Esophagus squamous epithelium (tissue), 5 donors: ENCODE measurements at regions of chr11 and their contacts with region 1.

Region 1: GRCh38 chr11:63838678-63839507 is at the start of gene MARK2:
- DNase-seq: peak; percentile 97
- H3K4me3 ChIP-seq: peak within 1 kb of the TSS; percentile 75 to 98 (median 86)
- H3K27ac ChIP-seq: peak within 1 kb of the TSS; percentile 93 to 96 (median 95)
- H3K4me1 ChIP-seq: peaks cover 42 to 56% (median 43%) of the 10 kb centered on the region in 3 donors
- H3K27me3 ChIP-seq: no peaks in the 10 kb centered on the region
- CTCF ChIP-seq: peak in 3 of 6 experiments; percentile 7 to 20 (median 7)
- POLR2A ChIP-seq: peak in 3 of 4 donors; percentile 49 to 79 (median 67)
- total RNA-seq, gene MARK2: 47.0 to 91.0 (median 62.2) TPM

Region 2: GRCh38 chr11:63369165-63369970 is 469.5 kb before region 1 on chr11 and contains the start of gene SLC22A9:
- intact Hi-C with region 1: no loop called
- DNase-seq: no peak
- H3K4me3 ChIP-seq: no peak within 1 kb of the TSS
- H3K27ac ChIP-seq: no peak within 1 kb of the TSS
- H3K4me1 ChIP-seq: no peaks in the 10 kb centered on the region
- H3K27me3 ChIP-seq: peaks cover 0 to 18% (median 0%) of the 10 kb centered on the region in 4 donors
- CTCF ChIP-seq: no peak
- POLR2A ChIP-seq: no peak
- total RNA-seq, gene SLC22A9: not detected

Region 3: DNA sequence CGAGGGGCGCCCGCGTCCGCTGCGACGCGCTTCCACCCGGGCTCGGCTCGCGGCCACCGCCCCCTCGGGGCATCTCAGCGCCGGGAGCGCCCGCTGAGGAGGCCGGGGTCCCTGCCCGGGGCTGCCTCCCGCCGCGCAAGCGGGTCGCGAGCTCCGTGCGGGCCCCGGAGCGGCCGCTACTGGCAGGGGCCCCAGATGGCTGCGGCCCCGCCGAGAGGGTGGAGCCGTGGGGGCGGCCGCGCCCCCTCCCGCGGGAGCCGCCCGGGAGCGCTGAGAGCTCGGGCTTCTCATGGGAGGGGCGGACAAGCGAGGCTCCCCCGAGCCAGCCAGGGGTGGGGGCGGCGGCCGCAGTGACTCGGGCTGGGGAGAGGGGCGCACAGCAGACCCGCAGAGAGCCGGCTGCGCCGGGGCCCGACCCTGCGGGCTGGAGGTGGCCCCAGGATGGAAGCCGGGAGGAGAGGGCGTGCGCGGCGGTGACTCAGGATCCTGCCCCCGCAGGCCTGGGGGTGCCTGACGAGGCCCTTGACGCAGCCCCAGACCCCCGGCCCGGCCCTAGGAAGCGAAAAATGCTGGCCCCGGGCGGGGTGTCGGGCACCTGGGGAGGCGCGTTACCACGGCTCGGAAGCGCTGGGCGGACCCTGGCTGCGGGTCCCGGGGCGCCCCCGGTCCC is 69.7 kb before region 1 on chr11:
- intact Hi-C with region 1: no loop called
- DNase-seq: no peak
- H3K4me3 ChIP-seq: peak overlapping the region; percentile 47 to 98 (median 82)
- H3K27ac ChIP-seq: peak overlapping the region; percentile 65 to 89 (median 80)
- H3K4me1 ChIP-seq: peaks cover 14 to 55% (median 28%) of the 10 kb centered on the region in 3 donors
- H3K27me3 ChIP-seq: peaks cover 0 to 11% (median 0%) of the 10 kb centered on the region in 4 donors
- CTCF ChIP-seq: peak in 1 of 6 experiments; percentile 22
- POLR2A ChIP-seq: peak in 1 of 4 donors; percentile 18

Region 4: DNA sequence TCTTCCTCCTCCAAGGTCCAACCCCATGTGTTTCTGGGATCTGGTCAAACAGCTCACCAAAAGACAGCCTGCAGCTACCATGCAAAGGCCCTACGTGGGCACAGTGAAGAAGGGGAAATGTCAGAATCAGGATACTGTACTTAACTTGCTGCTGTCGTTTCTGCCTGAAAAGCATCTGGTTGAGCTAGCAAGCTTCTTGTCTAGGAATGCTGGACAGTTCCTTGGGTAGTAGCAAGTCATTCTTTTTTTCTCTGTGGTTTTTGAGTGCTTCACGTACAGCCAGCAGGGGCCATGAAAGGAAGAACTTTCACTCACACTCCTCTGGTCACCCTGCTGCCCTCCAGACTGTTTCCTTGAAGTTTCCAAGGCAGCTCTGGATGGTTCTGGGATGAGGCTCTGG is 53.3 kb after region 1 on chr11:
- intact Hi-C with region 1: loop called (anchors 10 kb)
- DNase-seq: no peak
- H3K4me3 ChIP-seq: no peak overlapping the region
- H3K27ac ChIP-seq: no peak overlapping the region
- H3K4me1 ChIP-seq: peaks cover 30 to 68% (median 51%) of the 10 kb centered on the region in 3 donors
- H3K27me3 ChIP-seq: no peaks in the 10 kb centered on the region
- CTCF ChIP-seq: no peak
- POLR2A ChIP-seq: no peak

Region 5: GRCh38 chr11:63945477-63946163 is 106.7 kb after region 1 on chr11:
- intact Hi-C with region 1: loop called (anchors 2 kb)
- DNase-seq: no peak
- H3K4me3 ChIP-seq: peak overlapping the region in 2 of 4 donors; percentile 2 to 39
- H3K27ac ChIP-seq: peak overlapping the region; percentile 33 to 65 (median 55)
- H3K4me1 ChIP-seq: peaks cover 9 to 36% (median 12%) of the 10 kb centered on the region in 3 donors
- H3K27me3 ChIP-seq: no peaks in the 10 kb centered on the region
- CTCF ChIP-seq: peak; percentile 50 to 87 (median 83)
- POLR2A ChIP-seq: no peak

Region 6: DNA sequence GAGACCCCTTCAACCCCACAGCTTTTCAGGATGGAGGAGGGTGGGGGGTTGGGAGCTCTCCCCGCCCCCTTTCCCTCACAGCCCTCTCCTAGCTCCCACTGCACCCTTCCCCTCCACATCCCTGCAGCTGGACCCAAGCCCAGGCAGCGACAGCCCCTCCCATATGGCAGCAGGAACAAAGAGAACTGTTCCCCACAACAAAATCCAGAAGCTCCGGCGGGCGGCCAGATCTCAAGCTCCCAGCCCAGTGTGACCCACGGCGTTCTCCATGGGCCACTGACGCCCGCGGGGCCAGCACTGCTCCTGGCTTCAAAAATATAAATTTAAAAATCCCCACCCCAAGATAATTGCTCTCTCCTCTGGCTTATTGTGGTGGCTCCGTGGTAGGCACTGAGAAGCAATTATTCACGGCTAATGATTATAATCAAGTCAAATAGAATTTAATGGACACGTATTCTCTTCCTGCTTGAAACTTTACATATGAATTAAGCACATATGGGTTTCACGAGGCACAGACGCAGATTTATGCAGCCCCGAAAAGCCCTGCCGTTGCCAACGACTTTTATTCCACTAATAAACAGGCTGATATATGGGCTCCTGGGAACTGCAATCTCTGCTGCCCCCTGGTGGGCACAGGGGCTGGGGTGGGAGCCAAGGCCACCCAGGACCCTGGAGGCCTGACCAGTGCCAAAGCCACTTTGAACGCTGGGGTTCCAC is 309.5 kb after region 1 on chr11:
- intact Hi-C with region 1: loop called (anchors 10 kb)
- DNase-seq: no peak
- H3K4me3 ChIP-seq: peak overlapping the region in 3 of 4 donors; percentile 19 to 53 (median 24)
- H3K27ac ChIP-seq: peak overlapping the region in 2 of 4 donors; percentile 48 to 50
- H3K4me1 ChIP-seq: peaks cover 3 to 35% (median 13%) of the 10 kb centered on the region in 3 donors
- H3K27me3 ChIP-seq: no peaks in the 10 kb centered on the region
- CTCF ChIP-seq: peak; percentile 85 to 96 (median 94)
- POLR2A ChIP-seq: no peak